Naive thymus-derived CD4-positive, alpha-beta T cell (primary cell): ENCODE measurements at regions of chr7 and their contacts with region 1.

Region 1: GRCh38 chr7:87152107-87152844 is at the start of gene DMTF1:
- DNase-seq: peak; percentile 76 to 85 (median 83)
- ATAC-seq: peak; percentile 91
- H3K4me3 ChIP-seq: peak within 1 kb of the TSS; percentile 72
- H3K4me3 Mint-ChIP-seq: peak within 1 kb of the TSS; percentile 87 to 99 (median 97)
- H3K27ac ChIP-seq: peak within 1 kb of the TSS; percentile 95
- H3K27ac Mint-ChIP-seq: peak within 1 kb of the TSS; percentile 96 to 100 (median 98)
- H3K4me1 ChIP-seq: peaks cover 27% of the 10 kb centered on the region in 2 donors
- H3K4me1 Mint-ChIP-seq: peaks cover 25 to 53% (median 47%) of the 10 kb centered on the region in 7 donors
- H3K27me3 ChIP-seq: no peaks in the 10 kb centered on the region
- H3K27me3 Mint-ChIP-seq: no peaks in the 10 kb centered on the region
- total RNA-seq, gene DMTF1: 118 to 159 (median 131) TPM

Region 2: DNA sequence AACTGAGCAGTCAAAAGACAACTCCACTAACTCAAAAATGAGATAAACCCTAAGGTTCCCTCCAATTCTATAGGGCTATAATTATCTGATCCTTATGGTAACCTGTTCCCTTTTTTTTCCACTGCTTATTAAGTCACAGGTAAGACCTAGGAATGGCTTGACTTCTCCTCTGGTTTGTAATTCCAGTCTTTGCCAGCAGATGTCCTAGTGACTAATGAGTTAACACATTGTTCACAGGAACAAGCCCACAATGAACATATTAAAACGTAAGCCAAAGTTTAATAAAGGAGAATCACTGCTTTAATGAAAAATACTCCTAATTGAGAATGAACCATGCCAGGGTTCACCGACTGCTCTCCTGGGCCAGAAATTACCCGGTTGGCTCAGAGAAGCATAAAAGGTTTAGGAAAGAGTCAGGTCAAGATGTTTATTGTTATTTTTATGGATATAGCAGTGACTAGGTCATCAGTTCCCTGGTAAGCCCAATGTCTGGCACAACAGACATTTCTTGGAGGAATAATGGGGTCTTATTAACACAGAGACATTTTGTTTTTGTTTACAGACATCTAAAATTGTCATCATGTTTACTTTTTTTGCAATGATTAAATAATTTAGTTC is 213.0 kb before region 1 on chr7:
- CTCF ChIA-PET with region 1: interaction called, 4 read pairs
- POLR2A ChIA-PET with region 1: no interaction called
- intact Hi-C with region 1: loop called (anchors 1 kb)
- DNase-seq: peak in 7 of 9 donors; percentile 30 to 61 (median 51)
- ATAC-seq: peak; percentile 70
- H3K4me3 ChIP-seq: no peak overlapping the region
- H3K4me3 Mint-ChIP-seq: no peak overlapping the region
- H3K27ac ChIP-seq: no peak overlapping the region
- H3K27ac Mint-ChIP-seq: peak overlapping the region in 1 of 9 donors; percentile 73
- H3K4me1 ChIP-seq: no peaks in the 10 kb centered on the region
- H3K4me1 Mint-ChIP-seq: peaks cover 0 to 2% (median 0%) of the 10 kb centered on the region in 7 donors
- H3K27me3 ChIP-seq: no peaks in the 10 kb centered on the region
- H3K27me3 Mint-ChIP-seq: peaks cover 0 to 5% (median 0%) of the 10 kb centered on the region in 5 donors

Region 3: GRCh38 chr7:87173471-87173870 is 21.2 kb after region 1 on chr7:
- CTCF ChIA-PET with region 1: no interaction called
- POLR2A ChIA-PET with region 1: interaction called, 7 read pairs
- intact Hi-C with region 1: loop called in 1 of 2 experiments (anchors 2 kb)
- DNase-seq: no peak
- ATAC-seq: no peak
- H3K4me3 ChIP-seq: no peak overlapping the region
- H3K4me3 Mint-ChIP-seq: no peak overlapping the region
- H3K27ac ChIP-seq: no peak overlapping the region
- H3K27ac Mint-ChIP-seq: peak overlapping the region in 7 of 9 donors; percentile 6 to 75 (median 45)
- H3K4me1 ChIP-seq: no peaks in the 10 kb centered on the region
- H3K4me1 Mint-ChIP-seq: peaks cover 17 to 48% (median 37%) of the 10 kb centered on the region in 7 donors
- H3K27me3 ChIP-seq: no peaks in the 10 kb centered on the region
- H3K27me3 Mint-ChIP-seq: no peaks in the 10 kb centered on the region

Region 4: GRCh38 chr7:87219545-87220025 is 67.3 kb after region 1 on chr7 and contains the start of gene TMEM243:
- CTCF ChIA-PET with region 1: interaction called, 7 read pairs
- POLR2A ChIA-PET with region 1: interaction called, 188 read pairs
- intact Hi-C with region 1: loop called (anchors 1 kb)
- DNase-seq: peak; percentile 72 to 91 (median 89)
- ATAC-seq: peak; percentile 81
- H3K4me3 ChIP-seq: peak within 1 kb of the TSS; percentile 90
- H3K4me3 Mint-ChIP-seq: peak within 1 kb of the TSS; percentile 96 to 100 (median 99)
- H3K27ac ChIP-seq: peak within 1 kb of the TSS; percentile 96
- H3K27ac Mint-ChIP-seq: peak within 1 kb of the TSS; percentile 94 to 100 (median 99)
- H3K4me1 ChIP-seq: peaks cover 22 to 41% of the 10 kb centered on the region in 2 donors
- H3K4me1 Mint-ChIP-seq: peaks cover 18 to 44% (median 32%) of the 10 kb centered on the region in 7 donors
- H3K27me3 ChIP-seq: no peaks in the 10 kb centered on the region
- H3K27me3 Mint-ChIP-seq: peaks cover 0 to 12% (median 0%) of the 10 kb centered on the region in 5 donors
- total RNA-seq, gene TMEM243: 50.0 to 153 (median 125) TPM

Region 5: GRCh38 chr7:87628780-87629569 is 476.7 kb after region 1 on chr7:
- CTCF ChIA-PET with region 1: no interaction called
- POLR2A ChIA-PET with region 1: no interaction called
- intact Hi-C with region 1: loop called (anchors 1 to 2 kb)
- DNase-seq: peak in 8 of 9 donors; percentile 15 to 51 (median 36)
- ATAC-seq: peak; percentile 29
- H3K4me3 ChIP-seq: peak overlapping the region; percentile 64
- H3K4me3 Mint-ChIP-seq: peak overlapping the region; percentile 74 to 92 (median 83)
- H3K27ac ChIP-seq: peak overlapping the region; percentile 38
- H3K27ac Mint-ChIP-seq: peak overlapping the region in 5 of 9 donors; percentile 30 to 83 (median 54)
- H3K4me1 ChIP-seq: peaks cover 0 to 5% of the 10 kb centered on the region in 2 donors
- H3K4me1 Mint-ChIP-seq: peaks cover 7 to 14% (median 10%) of the 10 kb centered on the region in 7 donors
- H3K27me3 ChIP-seq: no peaks in the 10 kb centered on the region
- H3K27me3 Mint-ChIP-seq: peaks cover 4 to 32% (median 21%) of the 10 kb centered on the region in 5 donors

Region 6: GRCh38 chr7:88888684-88889083 is 1736.4 kb after region 1 on chr7:
- CTCF ChIA-PET with region 1: no interaction called
- POLR2A ChIA-PET with region 1: no interaction called
- intact Hi-C with region 1: no loop called
- DNase-seq: no peak
- ATAC-seq: no peak
- H3K4me3 ChIP-seq: no peak overlapping the region
- H3K4me3 Mint-ChIP-seq: no peak overlapping the region
- H3K27ac ChIP-seq: no peak overlapping the region
- H3K27ac Mint-ChIP-seq: no peak overlapping the region
- H3K4me1 ChIP-seq: no peaks in the 10 kb centered on the region
- H3K4me1 Mint-ChIP-seq: peaks cover 0 to 2% (median 0%) of the 10 kb centered on the region in 7 donors
- H3K27me3 ChIP-seq: no peaks in the 10 kb centered on the region
- H3K27me3 Mint-ChIP-seq: no peaks in the 10 kb centered on the region